ENCODE measurements at regions of chr17 and their contacts with region 1.

Region 1: GRCh38 chr17:979538-980405 is at the start of gene NXN:
- DNase-seq: peak; percentile 94
- ATAC-seq: peak; percentile 98
- H3K4me3 ChIP-seq: peak within 1 kb of the TSS; percentile 73
- H3K27ac ChIP-seq: peak within 1 kb of the TSS; percentile 70
- H3K4me1 ChIP-seq: peaks cover 14% of the 10 kb centered on the region
- H3K27me3 ChIP-seq: no peaks in the 10 kb centered on the region
- CTCF ChIP-seq: peak; percentile 17
- total RNA-seq, gene NXN: 57.3 TPM

Region 2: DNA sequence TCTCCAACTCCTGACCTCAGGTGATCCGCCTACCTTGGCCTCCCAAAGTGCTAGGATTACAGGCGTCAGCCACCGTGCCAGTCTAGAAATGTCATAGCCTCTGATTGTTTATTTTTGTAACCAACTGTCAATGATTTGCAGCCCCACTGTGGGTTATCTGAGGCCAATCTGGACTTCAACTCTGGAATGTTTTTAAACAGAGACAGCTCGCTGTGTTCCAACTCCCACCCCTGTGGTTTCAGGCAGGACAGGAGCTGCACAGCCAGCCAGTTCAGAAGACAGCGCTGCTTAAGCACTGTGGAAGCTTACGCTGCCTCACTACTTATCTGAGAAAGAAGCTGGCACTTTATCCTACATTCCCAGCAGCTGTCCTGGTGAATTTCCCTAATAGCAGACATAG is 178.1 kb before region 1 on chr17:
- intact Hi-C with region 1: loop called (anchors 5 kb)
- DNase-seq: no peak
- ATAC-seq: no peak
- H3K4me3 ChIP-seq: no peak overlapping the region
- H3K27ac ChIP-seq: no peak overlapping the region
- H3K4me1 ChIP-seq: no peaks in the 10 kb centered on the region
- H3K27me3 ChIP-seq: no peaks in the 10 kb centered on the region
- CTCF ChIP-seq: no peak

Region 3: DNA sequence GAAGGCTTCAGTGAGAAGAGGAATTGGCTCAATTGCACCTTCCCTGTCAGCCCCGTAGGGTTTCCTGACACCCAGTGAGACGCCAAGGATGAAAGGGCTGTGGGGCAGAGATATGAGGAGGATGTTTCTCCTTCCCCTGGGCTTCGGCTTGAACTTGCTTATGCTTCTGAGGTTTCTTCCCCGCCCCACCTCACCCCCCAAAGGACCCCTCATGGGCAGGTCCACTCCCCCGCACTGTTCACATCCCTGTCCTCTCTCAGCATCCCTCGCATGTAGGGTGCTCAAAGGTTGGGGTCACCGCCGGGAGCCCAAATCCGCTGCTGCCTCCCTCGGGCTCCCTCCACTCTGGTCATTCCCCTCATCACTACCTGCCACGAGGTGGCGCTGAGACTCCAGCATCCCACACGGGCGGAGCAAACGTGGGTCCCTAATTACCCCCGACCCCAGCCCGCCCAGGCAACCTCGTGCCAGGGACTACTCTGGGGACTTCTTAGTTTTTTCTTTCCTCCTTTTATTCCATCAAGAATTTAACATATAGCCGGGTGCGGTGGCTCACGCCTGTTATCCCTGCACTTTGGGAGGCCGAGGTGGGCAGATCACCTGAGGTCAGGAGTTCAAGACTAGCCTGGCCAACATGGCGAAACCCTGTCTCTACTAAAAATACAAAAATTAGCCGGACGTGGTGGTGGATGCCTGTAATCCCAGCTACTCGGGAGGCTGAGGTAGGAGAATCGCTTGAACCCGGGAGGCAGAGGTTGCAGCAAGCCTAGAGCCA is 296.4 kb after region 1 on chr17:
- intact Hi-C with region 1: no loop called
- DNase-seq: peak; percentile 83
- ATAC-seq: peak; percentile 84
- H3K4me3 ChIP-seq: no peak overlapping the region
- H3K27ac ChIP-seq: no peak overlapping the region
- H3K4me1 ChIP-seq: no peaks in the 10 kb centered on the region
- H3K27me3 ChIP-seq: peaks cover 25% of the 10 kb centered on the region
- CTCF ChIP-seq: peak; percentile 80

Measured in upper lobe of right lung (tissue), 1 donor.